Caco-2 (cell line): ENCODE measurements at regions of chr12 and their contacts with region 1.

Region 1: GRCh38 chr12:59365133-59365532 is 230.7 kb upstream of the SLC16A7 start:
- DNase-seq: no peak
- H3K4me3 ChIP-seq: no peak overlapping the region
- H3K4me3 Mint-ChIP-seq: no peak overlapping the region
- H3K27ac Mint-ChIP-seq: no peak overlapping the region
- H3K4me1 ChIP-seq: peaks cover 10% of the 10 kb centered on the region
- H3K4me1 Mint-ChIP-seq: no peaks in the 10 kb centered on the region
- H3K27me3 ChIP-seq: no peaks in the 10 kb centered on the region
- H3K27me3 Mint-ChIP-seq: peaks cover 10% of the 10 kb centered on the region
- CTCF ChIP-seq: no peak

Region 2: DNA sequence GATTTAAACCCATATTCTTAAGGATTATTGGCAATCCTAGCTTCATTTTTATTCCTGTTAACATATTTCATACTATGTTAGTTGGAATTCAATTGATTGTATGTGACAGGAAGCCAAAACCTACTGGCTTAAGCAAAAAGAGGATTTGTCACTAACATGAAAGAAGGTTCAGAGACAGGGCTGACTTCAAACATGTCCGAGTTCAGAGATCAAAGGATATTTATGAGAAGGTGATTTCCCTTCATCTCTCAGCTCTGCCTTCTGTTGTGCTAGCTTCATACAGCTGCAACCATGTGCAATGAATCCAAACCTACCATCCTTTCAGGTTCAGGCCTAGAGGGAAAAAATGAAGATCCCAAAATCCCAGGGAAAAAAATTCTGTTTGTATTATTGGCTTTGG is 1074.0 kb before region 1 on chr12:
- CTCF ChIA-PET with region 1: no interaction called
- POLR2A ChIA-PET with region 1: no interaction called
- intact Hi-C with region 1: loop called (anchors 5 kb)
- DNase-seq: no peak
- H3K4me3 ChIP-seq: no peak overlapping the region
- H3K4me3 Mint-ChIP-seq: no peak overlapping the region
- H3K27ac Mint-ChIP-seq: no peak overlapping the region
- H3K4me1 ChIP-seq: no peaks in the 10 kb centered on the region
- H3K4me1 Mint-ChIP-seq: peaks cover 6% of the 10 kb centered on the region
- H3K27me3 ChIP-seq: no peaks in the 10 kb centered on the region
- H3K27me3 Mint-ChIP-seq: no peaks in the 10 kb centered on the region
- CTCF ChIP-seq: no peak

Region 3: GRCh38 chr12:59329457-59329856 is 35.7 kb before region 1 on chr12:
- CTCF ChIA-PET with region 1: no interaction called
- POLR2A ChIA-PET with region 1: no interaction called
- intact Hi-C with region 1: no loop called
- DNase-seq: no peak
- H3K4me3 ChIP-seq: no peak overlapping the region
- H3K4me3 Mint-ChIP-seq: no peak overlapping the region
- H3K27ac Mint-ChIP-seq: no peak overlapping the region
- H3K4me1 ChIP-seq: no peaks in the 10 kb centered on the region
- H3K4me1 Mint-ChIP-seq: no peaks in the 10 kb centered on the region
- H3K27me3 ChIP-seq: no peaks in the 10 kb centered on the region
- H3K27me3 Mint-ChIP-seq: no peaks in the 10 kb centered on the region
- CTCF ChIP-seq: no peak